Pancreas (tissue), 10 donors: ENCODE measurements at regions of chr18 and their contacts with region 1.

Region 1: DNA sequence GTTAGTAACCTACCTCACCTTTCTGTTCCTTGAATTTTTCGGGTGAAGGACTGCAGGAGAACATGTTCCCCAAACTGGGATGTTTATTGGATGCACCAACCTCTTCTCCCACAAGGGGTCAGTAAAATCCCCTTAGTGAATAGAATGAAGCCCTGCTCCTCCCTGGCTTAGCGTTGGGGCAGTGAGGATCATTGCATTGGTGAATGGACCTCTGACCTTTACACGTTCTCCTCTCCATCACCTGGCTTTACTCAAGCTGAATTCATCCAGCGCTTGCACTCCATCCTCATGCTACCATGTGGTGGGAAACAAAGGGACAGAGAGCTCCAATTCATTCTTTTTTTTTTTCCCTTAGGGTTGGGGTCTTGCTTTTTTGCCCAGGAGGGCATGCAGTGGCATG is 157.2 kb downstream of the MIB1 start:
- DNase-seq: peak in 2 of 6 donors; percentile 17 to 47
- ATAC-seq: peak; percentile 47 to 90 (median 84)
- H3K4me3 ChIP-seq: no peak overlapping the region
- H3K27ac ChIP-seq: no peak overlapping the region
- H3K4me1 ChIP-seq: no peaks in the 10 kb centered on the region
- H3K27me3 ChIP-seq: no peaks in the 10 kb centered on the region
- CTCF ChIP-seq: peak; percentile 31 to 64 (median 56)

Region 2: DNA sequence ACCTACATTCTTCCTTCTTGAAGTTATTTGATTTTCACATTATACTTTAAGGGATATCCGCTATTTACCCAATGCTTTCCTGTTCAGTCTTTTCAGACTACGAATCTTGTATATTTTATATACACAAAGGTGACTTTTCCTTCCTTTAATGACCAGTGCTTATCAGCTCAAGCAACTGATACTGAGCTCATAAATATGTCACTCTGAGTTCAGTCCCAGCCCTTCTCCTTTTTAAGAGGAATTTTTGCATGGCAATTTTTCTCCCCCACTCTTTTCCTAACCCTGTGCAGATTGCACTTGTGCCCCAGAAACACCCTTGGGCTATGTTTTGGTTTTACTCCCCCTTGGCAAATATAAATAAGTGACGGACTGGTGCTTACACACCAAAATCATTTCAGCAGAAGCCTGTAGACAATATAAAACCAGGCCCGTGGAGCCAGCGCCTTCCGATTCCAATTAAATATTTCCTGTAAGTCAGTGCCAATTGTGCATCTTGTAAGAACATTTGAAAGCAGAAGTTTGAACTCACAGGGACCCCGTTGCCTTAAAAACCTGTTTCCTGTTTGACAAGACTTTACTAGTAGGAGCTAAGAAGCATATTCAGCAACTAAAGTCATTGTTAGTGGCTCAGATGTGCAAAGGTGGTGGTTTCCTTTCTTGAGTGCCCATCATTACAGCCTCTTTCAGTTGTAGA is 205.3 kb after region 1 on chr18:
- intact Hi-C with region 1: no loop called
- DNase-seq: no peak
- ATAC-seq: no peak
- H3K4me3 ChIP-seq: no peak overlapping the region
- H3K27ac ChIP-seq: no peak overlapping the region
- H3K4me1 ChIP-seq: peaks cover 0 to 6% (median 4%) of the 10 kb centered on the region in 3 donors
- H3K27me3 ChIP-seq: no peaks in the 10 kb centered on the region
- CTCF ChIP-seq: no peak

Region 3: DNA sequence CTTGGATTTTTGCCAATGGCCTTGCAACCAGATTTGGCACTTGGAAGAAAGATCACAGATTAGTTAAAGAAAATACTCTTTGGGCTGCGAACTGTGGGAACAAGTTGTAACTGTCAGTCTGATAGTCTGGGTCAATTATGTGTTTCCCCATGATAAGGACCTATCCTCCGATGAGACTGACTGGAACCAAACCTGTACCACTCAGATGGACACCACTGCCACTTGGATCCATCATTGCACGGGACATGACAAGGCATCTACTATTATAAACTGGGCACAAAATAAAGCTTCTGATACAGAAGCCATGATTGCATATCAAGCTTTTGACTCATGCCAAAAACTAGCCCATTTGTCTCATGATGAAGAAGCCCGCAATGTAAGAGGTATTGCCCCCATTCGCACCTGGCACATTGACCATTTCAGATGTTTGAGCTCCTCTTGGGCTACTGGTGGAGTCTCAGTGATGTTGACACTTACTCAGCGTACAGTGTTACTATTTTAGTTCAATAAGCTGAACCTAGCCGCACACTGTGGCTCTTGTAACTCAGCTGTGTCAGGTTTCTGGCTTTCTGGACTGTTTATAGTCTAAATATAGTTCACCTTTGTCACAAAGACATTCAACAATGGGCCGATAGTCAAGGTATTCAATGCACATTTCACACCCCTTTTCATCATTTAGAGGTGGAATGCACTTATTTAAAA is 855.5 kb after region 1 on chr18:
- intact Hi-C with region 1: loop called in 1 of 3 experiments (anchors 10 kb)
- DNase-seq: no peak
- ATAC-seq: no peak
- H3K4me3 ChIP-seq: no peak overlapping the region
- H3K27ac ChIP-seq: no peak overlapping the region
- H3K4me1 ChIP-seq: no peaks in the 10 kb centered on the region
- H3K27me3 ChIP-seq: no peaks in the 10 kb centered on the region
- CTCF ChIP-seq: no peak